ENCODE measurements at regions of chr6 and their contacts with region 1.

Region 1: DNA sequence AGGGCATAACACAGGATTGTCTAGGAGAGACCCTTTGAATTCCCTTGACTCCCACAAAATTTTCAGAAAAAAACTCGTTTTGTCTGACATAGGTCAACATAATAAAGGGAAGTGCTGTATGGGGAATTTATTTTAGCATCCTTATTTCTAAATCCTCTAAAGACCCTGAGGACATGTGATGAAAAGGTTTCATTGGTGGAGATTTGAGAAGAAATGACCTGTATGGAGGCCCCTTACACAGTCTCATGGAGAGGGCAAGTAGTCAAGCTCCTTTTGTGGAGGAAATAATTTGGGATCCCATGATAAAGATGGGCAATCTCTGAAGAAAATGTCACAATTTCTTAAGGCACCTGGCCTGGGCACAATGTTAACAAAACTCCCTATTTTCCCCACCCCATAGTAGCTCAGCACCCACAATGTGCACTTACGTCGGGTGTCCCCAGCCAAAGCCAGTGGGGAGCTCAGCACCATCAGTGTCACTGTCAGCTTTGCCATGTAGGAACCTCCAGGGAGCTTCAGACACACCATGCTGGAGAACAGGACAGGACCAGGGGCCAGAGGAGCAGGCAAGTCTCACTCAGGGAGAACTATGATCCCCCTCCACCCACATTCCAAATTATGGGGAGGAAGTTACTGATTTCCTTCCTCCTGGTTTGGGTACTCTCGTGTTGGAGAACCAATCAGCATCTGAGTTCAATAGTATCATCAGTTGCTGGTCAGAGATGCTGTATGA is at the start of gene HLA-DRB5:
- DNase-seq: peak in 1 of 2 donors; percentile 53
- ATAC-seq: peak; percentile 77 to 82 (median 78)
- H3K4me3 ChIP-seq: peak within 1 kb of the TSS; percentile 48
- H3K4me3 Mint-ChIP-seq: peak within 1 kb of the TSS; percentile 69
- H3K27ac ChIP-seq: peak within 1 kb of the TSS; percentile 80
- H3K27ac Mint-ChIP-seq: peak within 1 kb of the TSS in 1 of 2 donors; percentile 29
- H3K4me1 ChIP-seq: no peaks in the 10 kb centered on the region
- H3K4me1 Mint-ChIP-seq: peaks cover 4 to 22% of the 10 kb centered on the region in 2 donors
- H3K27me3 ChIP-seq: no peaks in the 10 kb centered on the region
- H3K27me3 Mint-ChIP-seq: peaks cover 6 to 29% of the 10 kb centered on the region in 2 donors
- CTCF ChIP-seq: no peak
- total RNA-seq, gene HLA-DRB5: 17.9 to 48.5 (median 25.6) TPM

Region 2: DNA sequence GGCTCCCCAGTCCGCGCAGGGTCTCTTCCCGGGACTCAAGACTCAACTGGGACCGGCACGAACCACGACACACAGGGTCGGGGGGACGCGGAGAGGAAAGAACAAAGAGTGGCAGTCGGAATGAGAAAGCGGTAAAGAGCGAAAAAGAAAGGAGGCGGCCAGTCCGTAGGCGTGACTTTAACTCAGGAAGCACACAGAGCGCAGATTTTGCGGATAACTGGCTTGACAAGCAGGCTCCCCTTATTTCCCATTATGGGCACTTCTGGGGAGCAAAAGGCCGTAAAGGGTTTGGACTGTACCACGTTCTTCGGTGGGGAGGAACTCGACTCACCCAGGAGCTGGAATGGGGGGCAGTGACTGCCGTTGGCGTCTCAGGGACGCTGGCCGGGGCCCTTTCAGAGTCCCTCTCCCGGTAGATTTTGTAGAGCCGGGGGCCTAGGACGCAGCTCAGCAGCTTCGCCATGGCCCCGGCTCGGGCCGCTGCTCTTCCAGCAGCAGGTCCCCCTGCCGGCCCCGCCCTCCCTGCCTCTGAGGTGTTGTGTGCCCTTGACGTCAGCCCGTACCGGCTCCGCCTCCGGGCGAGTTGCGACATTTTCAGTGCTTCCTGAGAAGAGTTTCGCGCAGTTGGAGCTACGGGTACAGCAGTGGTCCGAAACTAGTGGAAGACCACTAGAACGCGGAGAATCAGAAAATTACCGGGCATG is 826.9 kb before region 1 on chr6 and contains the start of gene ABHD16A:
- intact Hi-C with region 1: no loop called
- DNase-seq: peak; percentile 97 to 99
- ATAC-seq: peak; percentile 93 to 97 (median 95)
- H3K4me3 ChIP-seq: peak within 1 kb of the TSS; percentile 80
- H3K4me3 Mint-ChIP-seq: peak within 1 kb of the TSS; percentile 99
- H3K27ac ChIP-seq: peak within 1 kb of the TSS; percentile 98
- H3K27ac Mint-ChIP-seq: peak within 1 kb of the TSS; percentile 96 to 98
- H3K4me1 ChIP-seq: peaks cover 28% of the 10 kb centered on the region
- H3K4me1 Mint-ChIP-seq: peaks cover 24 to 27% of the 10 kb centered on the region in 2 donors
- H3K27me3 ChIP-seq: no peaks in the 10 kb centered on the region
- H3K27me3 Mint-ChIP-seq: no peaks in the 10 kb centered on the region
- CTCF ChIP-seq: no peak
- total RNA-seq, gene ABHD16A: 92.0 to 97.6 (median 94.2) TPM

Region 3: GRCh38 chr6:32589598-32590449 is 60.0 kb after region 1 on chr6 and contains the start of gene HLA-DRB1:
- intact Hi-C with region 1: loop called (anchors 1 kb)
- DNase-seq: peak; percentile 38 to 59
- ATAC-seq: peak; percentile 96 to 97 (median 96)
- H3K4me3 ChIP-seq: peak within 1 kb of the TSS; percentile 36
- H3K4me3 Mint-ChIP-seq: peak within 1 kb of the TSS; percentile 78
- H3K27ac ChIP-seq: peak within 1 kb of the TSS; percentile 73
- H3K27ac Mint-ChIP-seq: peak within 1 kb of the TSS; percentile 27 to 87
- H3K4me1 ChIP-seq: no peaks in the 10 kb centered on the region
- H3K4me1 Mint-ChIP-seq: peaks cover 40 to 44% of the 10 kb centered on the region in 2 donors
- H3K27me3 ChIP-seq: no peaks in the 10 kb centered on the region
- H3K27me3 Mint-ChIP-seq: peaks cover 6% of the 10 kb centered on the region in 2 donors
- CTCF ChIP-seq: no peak
- total RNA-seq, gene HLA-DRB1: 42.8 to 123 (median 53.9) TPM

Measured in natural killer cell (primary cell).